Heart right ventricle (tissue), 16 donors: ENCODE measurements at regions of chr4 and their contacts with region 1.

Region 1: GRCh38 chr4:44629280-44629866 is 22.1 kb downstream of the YIPF7 start:
- DNase-seq: peak in 1 of 2 donors; percentile 15
- ATAC-seq: peak in 3 of 8 donors; percentile 46 to 63 (median 48)
- H3K4me3 ChIP-seq: no peak overlapping the region
- H3K27ac ChIP-seq: no peak overlapping the region
- H3K4me1 ChIP-seq: peaks cover 0 to 3% (median 0%) of the 10 kb centered on the region in 9 donors
- H3K27me3 ChIP-seq: no peaks in the 10 kb centered on the region
- CTCF ChIP-seq: peak; percentile 19 to 81 (median 73)

Region 2: DNA sequence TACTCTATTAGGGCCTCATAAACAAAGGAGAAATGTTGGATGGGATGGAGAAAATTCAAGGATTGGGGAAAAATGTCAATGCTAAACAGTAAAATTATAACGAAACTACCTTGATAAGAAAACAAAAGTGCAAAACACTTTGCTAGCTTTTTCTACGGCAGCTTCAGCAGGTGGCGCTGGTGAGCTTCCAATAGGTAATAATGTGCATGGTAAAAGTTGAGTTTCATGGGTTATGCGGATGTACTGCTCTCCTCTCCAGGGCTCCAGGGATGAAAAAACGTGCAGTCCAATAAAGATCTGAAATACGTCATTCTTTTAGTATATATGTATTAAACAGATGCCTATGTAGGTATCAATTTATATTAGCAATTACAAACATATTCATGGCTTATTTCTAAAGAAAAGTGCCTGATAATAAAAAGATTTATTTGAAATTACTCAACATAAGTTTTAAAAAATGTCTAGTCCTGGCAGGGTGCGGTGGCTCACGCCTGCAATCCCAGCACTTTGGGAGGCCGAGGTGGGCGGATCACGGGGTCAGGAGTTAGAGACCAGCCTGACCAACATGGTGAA is 1497.3 kb before region 1 on chr4:
- intact Hi-C with region 1: loop called in 7 of 10 experiments (anchors 5 to 10 kb)
- DNase-seq: peak; percentile 16 to 24
- ATAC-seq: no peak
- H3K4me3 ChIP-seq: no peak overlapping the region
- H3K27ac ChIP-seq: no peak overlapping the region
- H3K4me1 ChIP-seq: no peaks in the 10 kb centered on the region
- H3K27me3 ChIP-seq: no peaks in the 10 kb centered on the region
- CTCF ChIP-seq: peak in 7 of 9 donors; percentile 48 to 76 (median 61)

Region 3: GRCh38 chr4:44448548-44449461 is 180.6 kb before region 1 on chr4 and contains the start of gene KCTD8:
- intact Hi-C with region 1: loop called in 1 of 10 experiments (anchors 10 kb)
- DNase-seq: peak; percentile 73 to 83
- ATAC-seq: peak; percentile 91 to 96 (median 94)
- H3K4me3 ChIP-seq: peak within 1 kb of the TSS; percentile 38 to 58 (median 52)
- H3K27ac ChIP-seq: peak within 1 kb of the TSS in 7 of 10 donors; percentile 26 to 77 (median 54)
- H3K4me1 ChIP-seq: peaks cover 2 to 26% (median 19%) of the 10 kb centered on the region in 9 donors
- H3K27me3 ChIP-seq: peaks cover 10 to 94% (median 73%) of the 10 kb centered on the region in 7 donors
- CTCF ChIP-seq: peak; percentile 15 to 77 (median 68)
- total RNA-seq, gene KCTD8: 0.12 to 0.39 (median 0.17) TPM in 7 of 10 donors, not detected in the others